Right cardiac atrium (tissue), 5 donors: ENCODE measurements at regions of chr2 and their contacts with region 1.

Region 1: DNA sequence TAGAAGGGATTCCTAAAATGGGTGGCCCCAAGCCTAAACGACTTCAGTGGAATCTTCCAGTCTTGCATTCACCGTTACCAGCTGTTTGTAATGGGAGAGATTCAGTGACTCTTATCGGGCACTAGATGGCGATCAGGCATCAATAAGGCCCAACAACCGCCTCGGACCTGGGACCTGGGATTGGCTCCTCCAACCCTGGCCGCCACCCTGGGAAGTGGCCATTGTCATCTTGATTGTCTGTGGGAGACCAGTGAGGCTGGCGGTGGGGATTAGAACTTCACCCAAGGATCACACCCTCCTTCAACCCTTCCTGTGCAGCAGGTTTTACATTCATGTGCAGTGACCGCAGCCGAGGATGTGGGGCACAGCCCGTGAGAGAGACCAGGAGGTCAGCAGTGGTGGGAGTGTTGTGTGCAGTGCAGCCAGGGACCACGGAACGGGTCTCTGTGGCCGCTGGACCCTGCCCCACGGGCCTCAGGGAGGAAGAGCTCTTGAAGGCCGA is 85.3 kb downstream of the SPP2 start:
- DNase-seq: peak; percentile 51 to 61 (median 55)
- ATAC-seq: peak; percentile 62 to 81
- H3K4me3 ChIP-seq: no peak overlapping the region
- H3K27ac ChIP-seq: no peak overlapping the region
- H3K4me1 ChIP-seq: no peaks in the 10 kb centered on the region
- H3K27me3 ChIP-seq: no peaks in the 10 kb centered on the region

Region 2: DNA sequence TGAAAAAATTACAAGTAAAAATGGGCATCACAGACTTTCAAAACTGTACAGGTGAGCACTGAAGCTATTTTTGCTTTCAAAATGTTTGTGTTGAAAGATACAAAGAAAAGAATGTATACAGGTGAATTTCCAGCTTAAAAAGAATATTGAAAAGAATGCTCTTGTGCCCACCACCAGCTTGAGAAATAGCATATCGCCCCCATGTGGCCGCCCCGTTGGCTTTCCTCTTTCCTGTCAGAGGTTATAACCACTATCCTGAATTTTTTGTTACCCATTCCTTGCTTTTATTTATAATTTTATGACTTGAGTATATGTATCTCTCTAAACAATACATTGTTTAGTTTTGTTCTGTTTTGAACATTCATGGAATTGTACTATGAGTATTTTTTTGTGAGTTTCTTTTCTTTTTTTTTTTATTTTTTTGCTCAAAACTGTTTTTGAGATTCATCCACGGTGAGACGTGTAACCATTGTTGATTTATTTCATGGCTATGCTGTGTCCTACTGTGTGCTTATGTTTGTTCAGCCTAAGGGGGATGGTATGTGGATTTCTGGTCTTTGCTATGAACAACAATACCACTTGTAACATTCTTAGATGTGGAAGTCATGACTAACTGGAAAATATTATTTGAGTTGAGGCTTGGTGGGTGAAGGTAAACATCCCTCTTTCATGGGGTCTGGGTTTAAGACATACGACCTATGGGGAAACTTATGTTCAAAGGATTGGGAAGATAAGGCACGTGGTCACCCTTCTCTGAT is 207.0 kb before region 1 on chr2:
- intact Hi-C with region 1: no loop called
- DNase-seq: no peak
- ATAC-seq: no peak
- H3K4me3 ChIP-seq: no peak overlapping the region
- H3K27ac ChIP-seq: no peak overlapping the region
- H3K4me1 ChIP-seq: no peaks in the 10 kb centered on the region
- H3K27me3 ChIP-seq: no peaks in the 10 kb centered on the region

Region 3: DNA sequence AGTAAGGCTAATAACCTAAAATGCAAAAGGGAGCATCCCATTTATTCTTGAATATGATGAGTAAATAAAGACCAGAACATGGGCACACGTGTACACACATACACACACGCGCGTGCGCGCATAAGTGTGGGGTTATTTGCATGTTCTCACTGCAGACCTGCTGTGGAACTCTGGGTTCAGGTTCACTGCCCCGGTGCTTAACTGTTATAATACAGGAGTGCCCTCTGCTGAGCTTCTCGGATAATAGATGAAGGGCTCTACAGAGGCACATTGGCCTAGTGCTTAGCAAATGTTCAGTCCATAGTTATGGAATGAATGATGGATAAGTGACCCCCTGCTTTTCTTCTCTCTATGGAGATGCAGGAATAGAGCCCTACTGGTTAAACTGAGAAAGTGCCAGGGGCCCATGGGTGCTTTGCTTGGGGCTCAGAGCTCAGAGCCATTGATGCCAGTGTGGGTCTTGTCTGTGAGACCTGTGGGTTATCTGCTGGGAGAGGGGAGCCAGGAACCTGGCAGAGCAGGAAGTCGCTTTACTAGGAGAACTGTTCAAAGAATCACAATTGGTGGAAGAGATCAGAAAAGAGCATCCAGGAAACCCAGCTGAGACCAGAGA is 364.7 kb after region 1 on chr2:
- intact Hi-C with region 1: loop called (anchors 2 to 5 kb)
- DNase-seq: peak in 2 of 3 donors; percentile 32 to 69
- ATAC-seq: peak; percentile 50 to 58
- H3K4me3 ChIP-seq: no peak overlapping the region
- H3K27ac ChIP-seq: no peak overlapping the region
- H3K4me1 ChIP-seq: peaks cover 6% of the 10 kb centered on the region
- H3K27me3 ChIP-seq: no peaks in the 10 kb centered on the region

Region 4: GRCh38 chr2:234544659-234545611 is 409.2 kb after region 1 on chr2:
- intact Hi-C with region 1: loop called in 3 of 4 experiments (anchors 5 to 10 kb)
- DNase-seq: peak; percentile 47 to 79 (median 77)
- ATAC-seq: peak; percentile 63 to 76
- H3K4me3 ChIP-seq: no peak overlapping the region
- H3K27ac ChIP-seq: no peak overlapping the region
- H3K4me1 ChIP-seq: no peaks in the 10 kb centered on the region
- H3K27me3 ChIP-seq: no peaks in the 10 kb centered on the region

Region 5: GRCh38 chr2:235116885-235117492 is 981.2 kb after region 1 on chr2:
- intact Hi-C with region 1: loop called in 1 of 4 experiments (anchors 10 kb)
- DNase-seq: no peak
- ATAC-seq: no peak
- H3K4me3 ChIP-seq: no peak overlapping the region
- H3K27ac ChIP-seq: no peak overlapping the region
- H3K4me1 ChIP-seq: no peaks in the 10 kb centered on the region
- H3K27me3 ChIP-seq: no peaks in the 10 kb centered on the region